Activated CD4-positive, alpha-beta T cell treated with anti-CD3 and anti-CD28 coated beads, Interleukin-2, amount 10 ng/mL, durations not matched to agents 24 days and 14 days (primary cell): ENCODE measurements at regions of chr7 and their contacts with region 1.

Region 1: DNA sequence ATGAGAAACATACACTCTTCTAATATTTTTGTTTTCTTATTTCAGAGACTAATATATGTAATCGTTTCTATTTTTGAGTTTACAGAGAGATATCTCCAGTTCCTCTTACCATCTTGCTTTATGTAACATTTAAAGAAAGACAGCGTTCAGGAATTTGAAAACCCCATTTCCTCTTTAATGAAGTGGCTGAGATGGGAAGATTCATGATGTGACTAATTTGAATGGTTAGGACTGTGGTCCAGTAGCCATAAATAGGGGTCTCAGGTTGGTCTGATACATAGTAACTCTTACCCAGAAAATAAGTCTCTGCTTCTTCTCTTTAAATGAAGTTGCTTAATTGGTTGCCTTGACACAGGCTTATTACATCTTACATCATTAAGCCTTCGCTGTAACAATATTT is 6.9 kb downstream of the KMT2E start:
- DNase-seq: no peak
- H3K4me3 Mint-ChIP-seq: peak overlapping the region; percentile 10
- H3K27ac Mint-ChIP-seq: no peak overlapping the region
- H3K4me1 Mint-ChIP-seq: peaks cover 52% of the 10 kb centered on the region
- H3K27me3 Mint-ChIP-seq: no peaks in the 10 kb centered on the region

Region 2: GRCh38 chr7:104960741-104961448 is 60.0 kb before region 1 on chr7:
- intact Hi-C with region 1: no loop called
- DNase-seq: no peak
- H3K4me3 Mint-ChIP-seq: no peak overlapping the region
- H3K27ac Mint-ChIP-seq: peak overlapping the region; percentile 54
- H3K4me1 Mint-ChIP-seq: peaks cover 50% of the 10 kb centered on the region
- H3K27me3 Mint-ChIP-seq: no peaks in the 10 kb centered on the region

Region 3: DNA sequence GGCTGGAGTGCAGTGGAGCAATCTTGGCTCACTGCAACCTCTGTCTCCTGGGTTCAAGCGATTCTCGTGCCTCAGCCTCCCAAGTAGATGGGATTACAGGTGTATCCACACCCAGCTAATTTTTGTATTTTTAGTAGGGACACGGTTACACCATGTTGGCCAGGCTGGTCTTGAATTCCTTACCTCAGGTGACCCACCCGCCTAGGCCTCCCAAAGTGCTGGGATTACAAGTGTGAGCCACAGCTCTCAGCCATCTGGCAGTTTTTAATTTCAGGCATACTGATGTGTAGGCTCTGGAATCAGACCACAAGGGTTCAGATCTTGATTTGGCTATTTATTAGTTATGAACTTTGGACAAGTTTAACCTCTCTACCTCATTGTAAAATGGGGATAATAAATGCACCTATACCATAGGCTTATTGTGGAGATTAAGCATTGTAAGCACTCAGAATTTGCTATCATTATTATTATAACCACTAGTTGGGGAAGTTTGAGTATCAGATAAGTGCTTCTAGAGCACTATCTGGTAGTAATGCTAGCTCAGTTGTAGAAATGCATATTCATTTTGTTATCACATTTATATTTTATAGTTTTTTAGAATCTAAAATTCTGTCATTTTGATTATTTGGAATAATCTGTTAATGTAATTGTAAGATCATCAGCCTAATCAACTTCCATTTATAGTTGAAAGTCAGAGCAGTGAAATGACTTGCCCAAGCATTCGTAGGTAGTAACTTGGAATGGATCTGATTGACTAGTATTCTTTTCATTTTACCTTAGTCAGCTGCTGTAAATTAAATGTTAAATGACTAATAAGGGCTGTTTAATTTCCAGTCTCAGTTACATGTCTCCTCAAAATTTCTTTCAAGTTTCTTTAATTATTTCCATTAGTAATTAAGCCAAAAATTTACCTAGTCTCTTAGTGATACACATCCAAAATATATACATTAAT is 15.6 kb after region 1 on chr7:
- intact Hi-C with region 1: loop called (anchors 2 kb)
- DNase-seq: no peak
- H3K4me3 Mint-ChIP-seq: no peak overlapping the region
- H3K27ac Mint-ChIP-seq: no peak overlapping the region
- H3K4me1 Mint-ChIP-seq: peaks cover 39% of the 10 kb centered on the region
- H3K27me3 Mint-ChIP-seq: no peaks in the 10 kb centered on the region